A673 (cell line): ENCODE measurements at regions of chr7 and their contacts with region 1.

Region 1: GRCh38 chr7:91034459-91035368 is 229.5 kb upstream of the FZD1 start:
- DNase-seq: peak; percentile 80
- H3K4me3 ChIP-seq: no peak overlapping the region
- H3K27ac ChIP-seq: peak overlapping the region; percentile 26
- H3K4me1 ChIP-seq: peaks cover 26% of the 10 kb centered on the region
- H3K27me3 ChIP-seq: no peaks in the 10 kb centered on the region
- CTCF ChIP-seq: peak; percentile 82

Region 2: DNA sequence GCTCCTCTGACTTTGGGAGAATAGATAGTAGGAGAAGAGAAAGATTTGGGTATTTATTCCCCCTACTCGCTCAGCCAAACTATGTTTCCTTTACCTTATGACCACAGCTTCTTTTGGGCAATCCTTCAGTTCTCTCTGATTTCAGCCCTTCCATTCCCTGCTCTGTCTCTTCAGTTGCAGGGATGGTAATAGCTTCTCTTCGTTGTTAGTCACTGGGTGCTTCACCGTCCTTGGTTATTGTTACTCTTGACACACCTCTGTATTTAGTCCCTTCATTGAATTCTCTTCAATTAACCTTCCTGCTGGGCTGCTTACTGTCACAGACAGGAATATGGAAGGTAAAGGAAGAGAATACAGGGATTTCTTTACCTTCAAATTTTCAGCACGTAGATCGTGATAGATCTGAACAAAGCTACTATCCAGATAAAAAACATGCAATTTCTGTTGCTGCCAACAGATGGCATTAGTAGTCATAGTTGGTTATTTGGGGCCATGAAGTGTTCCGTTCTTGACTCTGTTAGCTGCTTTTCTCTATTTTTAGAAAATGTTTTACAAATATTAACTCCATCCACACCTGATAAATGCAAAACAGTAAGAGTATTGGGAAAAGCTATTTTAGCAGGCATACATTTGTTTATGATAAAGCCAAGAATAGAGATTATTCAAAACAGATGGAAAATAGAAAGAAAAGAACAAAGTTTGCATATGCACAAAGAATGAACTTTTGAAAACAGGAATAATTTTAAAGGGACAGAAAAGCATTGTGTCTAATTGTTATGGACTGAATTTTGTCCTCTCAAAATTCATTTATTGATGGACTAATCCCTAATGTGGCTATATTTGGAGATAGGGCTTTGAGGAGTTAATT is 579.3 kb before region 1 on chr7:
- CTCF ChIA-PET with region 1: interaction called, 16 read pairs
- POLR2A ChIA-PET with region 1: no interaction called
- intact Hi-C with region 1: loop called (anchors 1 kb)
- DNase-seq: peak; percentile 76
- H3K4me3 ChIP-seq: peak overlapping the region; percentile 11
- H3K27ac ChIP-seq: peak overlapping the region; percentile 9
- H3K4me1 ChIP-seq: peaks cover 12% of the 10 kb centered on the region
- H3K27me3 ChIP-seq: no peaks in the 10 kb centered on the region
- CTCF ChIP-seq: peak; percentile 82

Region 3: GRCh38 chr7:90595801-90596671 is 438.7 kb before region 1 on chr7 and contains the start of gene CDK14:
- CTCF ChIA-PET with region 1: interaction called, 4 read pairs
- POLR2A ChIA-PET with region 1: no interaction called
- intact Hi-C with region 1: loop called (anchors 1 kb)
- DNase-seq: peak; percentile 86
- H3K4me3 ChIP-seq: peak within 1 kb of the TSS; percentile 69
- H3K27ac ChIP-seq: peak within 1 kb of the TSS; percentile 94
- H3K4me1 ChIP-seq: peaks cover 46% of the 10 kb centered on the region
- H3K27me3 ChIP-seq: no peaks in the 10 kb centered on the region
- CTCF ChIP-seq: peak; percentile 43
- total RNA-seq, gene CDK14: 128 and 131 TPM in 2 replicates

Region 4: GRCh38 chr7:90621125-90621746 is 413.5 kb before region 1 on chr7:
- CTCF ChIA-PET with region 1: interaction called, 8 read pairs
- POLR2A ChIA-PET with region 1: no interaction called
- intact Hi-C with region 1: loop called (anchors 5 kb)
- DNase-seq: peak; percentile 93
- H3K4me3 ChIP-seq: no peak overlapping the region
- H3K27ac ChIP-seq: peak overlapping the region; percentile 97
- H3K4me1 ChIP-seq: peaks cover 97% of the 10 kb centered on the region
- H3K27me3 ChIP-seq: no peaks in the 10 kb centered on the region
- CTCF ChIP-seq: no peak

Region 5: GRCh38 chr7:90708841-90709317 is 325.8 kb before region 1 on chr7:
- CTCF ChIA-PET with region 1: interaction called, 9 read pairs
- POLR2A ChIA-PET with region 1: no interaction called
- intact Hi-C with region 1: loop called (anchors 2 kb)
- DNase-seq: peak; percentile 90
- H3K4me3 ChIP-seq: peak overlapping the region; percentile 46
- H3K27ac ChIP-seq: peak overlapping the region; percentile 71
- H3K4me1 ChIP-seq: peaks cover 75% of the 10 kb centered on the region
- H3K27me3 ChIP-seq: no peaks in the 10 kb centered on the region
- CTCF ChIP-seq: peak; percentile 96

Region 6: GRCh38 chr7:90777465-90777864 is 257.2 kb before region 1 on chr7:
- CTCF ChIA-PET with region 1: no interaction called
- POLR2A ChIA-PET with region 1: no interaction called
- intact Hi-C with region 1: loop called (anchors 2 kb)
- DNase-seq: no peak
- H3K4me3 ChIP-seq: no peak overlapping the region
- H3K27ac ChIP-seq: peak overlapping the region; percentile 91
- H3K4me1 ChIP-seq: peaks cover 35% of the 10 kb centered on the region
- H3K27me3 ChIP-seq: no peaks in the 10 kb centered on the region
- CTCF ChIP-seq: no peak